PC-9 (cell line): ENCODE measurements at regions of chr1 and their contacts with region 1.

Region 1: DNA sequence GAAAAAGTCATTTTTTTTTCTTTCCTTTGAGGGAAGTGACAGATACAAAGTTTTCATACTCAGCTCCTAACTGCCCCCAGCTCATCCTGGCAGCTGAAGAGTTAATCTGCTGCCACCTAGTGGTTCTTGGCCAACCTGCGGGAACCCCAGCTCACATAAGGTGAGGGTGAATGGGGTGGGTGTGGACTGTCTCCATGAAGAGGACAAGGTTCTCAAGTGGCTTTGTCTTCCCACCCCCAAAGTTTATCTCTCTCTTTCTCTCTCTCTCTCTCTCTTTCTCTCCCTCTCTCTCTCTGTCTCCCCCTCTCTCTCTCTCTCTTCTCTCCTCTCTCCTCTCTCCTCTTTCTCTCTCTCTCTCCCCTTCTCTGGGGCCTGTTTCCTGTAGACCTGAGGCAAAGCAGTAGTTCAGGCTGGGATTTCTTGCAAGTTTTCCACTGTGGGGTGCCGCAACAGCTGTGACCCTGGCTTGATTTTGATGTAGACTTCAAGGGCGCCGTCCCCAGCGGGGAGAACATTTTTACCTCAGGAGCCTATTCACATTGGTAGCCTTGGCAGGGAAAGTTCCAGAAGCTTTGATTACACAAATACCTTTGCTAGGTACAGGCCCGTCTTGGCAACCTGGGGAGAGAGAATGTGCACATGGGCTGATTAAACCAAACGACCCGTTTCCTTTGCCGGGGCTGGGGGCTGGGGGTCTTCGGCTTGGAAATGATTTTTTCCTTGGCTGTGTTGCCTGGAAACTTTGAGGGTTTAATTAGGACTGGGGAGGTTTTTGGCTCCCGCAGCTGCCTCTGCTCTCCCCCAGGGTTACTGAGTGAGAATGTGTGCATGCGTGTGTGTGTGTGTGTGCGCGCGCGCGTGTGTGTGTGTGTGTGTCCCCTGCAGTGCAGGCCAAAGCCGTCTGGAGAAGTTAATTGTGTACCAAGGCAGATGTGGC is 135.9 kb downstream of the TM2D1 start:
- DNase-seq: peak; percentile 53 to 69
- H3K4me3 ChIP-seq: no peak overlapping the region
- H3K27ac ChIP-seq: no peak overlapping the region
- H3K4me1 ChIP-seq: no peaks in the 10 kb centered on the region
- H3K27me3 ChIP-seq: no peaks in the 10 kb centered on the region
- CTCF ChIP-seq: peak; percentile 90

Region 2: GRCh38 chr1:60857851-60858250 is 731.2 kb before region 1 on chr1:
- CTCF ChIA-PET with region 1: interaction called, 4 read pairs
- POLR2A ChIA-PET with region 1: no interaction called
- intact Hi-C with region 1: loop called (anchors 5 kb)
- DNase-seq: no peak
- H3K4me3 ChIP-seq: no peak overlapping the region
- H3K27ac ChIP-seq: no peak overlapping the region
- H3K4me1 ChIP-seq: no peaks in the 10 kb centered on the region
- H3K27me3 ChIP-seq: no peaks in the 10 kb centered on the region
- CTCF ChIP-seq: no peak

Region 3: GRCh38 chr1:60978421-60979357 is 610.3 kb before region 1 on chr1:
- CTCF ChIA-PET with region 1: no interaction called
- POLR2A ChIA-PET with region 1: no interaction called
- intact Hi-C with region 1: loop called (anchors 10 kb)
- DNase-seq: peak in 1 of 2 experiments; percentile 26
- H3K4me3 ChIP-seq: no peak overlapping the region
- H3K27ac ChIP-seq: no peak overlapping the region
- H3K4me1 ChIP-seq: no peaks in the 10 kb centered on the region
- H3K27me3 ChIP-seq: no peaks in the 10 kb centered on the region
- CTCF ChIP-seq: peak; percentile 56